ENCODE measurements at regions of chr13 and their contacts with region 1.

Region 1: GRCh38 chr13:23375001-23375971 is 58.2 kb downstream of the SACS start:
- DNase-seq: peak; percentile 94 to 100 (median 98)

Region 2: DNA sequence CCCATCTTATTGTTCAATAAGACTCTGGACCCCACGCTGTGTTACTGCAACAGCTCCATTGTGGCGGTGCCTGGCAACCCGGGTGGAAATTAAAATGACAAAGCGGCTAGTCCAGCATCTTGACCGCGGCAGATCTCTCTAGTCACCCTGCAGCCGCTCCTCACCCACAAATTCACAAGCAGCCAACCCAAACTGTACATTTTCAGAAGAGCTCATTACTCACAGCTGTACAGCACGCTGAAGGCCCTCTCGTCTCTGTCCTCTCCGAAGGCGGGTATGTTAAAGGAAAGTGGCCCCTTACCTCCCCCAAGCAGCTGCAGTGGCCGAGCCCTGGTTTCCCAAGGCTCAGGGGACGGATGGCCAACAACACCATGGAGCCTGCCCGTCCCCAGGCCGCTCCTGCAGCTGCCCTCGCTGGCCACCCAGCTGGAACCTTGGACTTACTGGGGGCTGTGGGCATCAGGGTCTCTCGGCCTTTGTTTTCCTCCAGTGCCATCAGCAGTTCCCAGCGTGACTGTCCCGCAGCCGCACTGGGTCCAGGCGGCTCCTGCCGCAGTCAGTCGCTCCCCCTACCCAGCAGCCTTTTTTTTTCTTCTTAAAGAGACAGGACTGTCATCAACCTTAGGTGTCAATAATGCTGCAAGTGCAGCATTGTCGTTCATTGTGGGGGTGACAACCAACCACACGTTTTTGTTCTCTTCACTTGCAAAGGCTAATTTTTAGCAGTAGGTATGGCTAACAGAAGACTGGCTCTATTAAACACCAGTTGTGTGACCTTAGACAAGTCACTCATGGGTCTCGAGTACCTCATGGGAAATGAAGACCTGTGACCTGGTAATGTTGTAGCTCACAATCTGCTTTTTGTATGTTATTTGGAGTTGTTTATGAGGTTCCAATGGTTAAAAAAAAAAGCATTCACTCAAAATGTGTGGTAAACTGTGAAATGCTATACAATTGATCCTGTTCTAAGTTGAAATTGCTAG is 58.2 kb after region 1 on chr13 and contains the start of gene SACS:
- intact Hi-C with region 1: loop called (anchors 10 kb)
- DNase-seq: peak; percentile 28 to 78 (median 63)